CD4-positive, alpha-beta memory T cell (primary cell): ENCODE measurements at regions of chr5 and their contacts with region 1.

Region 1: GRCh38 chr5:69217548-69218526 is 16.8 kb upstream of the CDK7 start:
- DNase-seq: peak; percentile 89 to 94 (median 90)
- H3K4me3 ChIP-seq: peak overlapping the region; percentile 67 to 92
- H3K4me3 Mint-ChIP-seq: peak overlapping the region; percentile 96 to 100 (median 98)
- H3K27ac ChIP-seq: peak overlapping the region; percentile 87
- H3K27ac Mint-ChIP-seq: peak overlapping the region; percentile 97 to 100 (median 98)
- H3K4me1 ChIP-seq: peaks cover 22% of the 10 kb centered on the region
- H3K4me1 Mint-ChIP-seq: peaks cover 19 to 27% (median 25%) of the 10 kb centered on the region in 4 donors
- H3K27me3 ChIP-seq: no peaks in the 10 kb centered on the region
- H3K27me3 Mint-ChIP-seq: no peaks in the 10 kb centered on the region

Region 2: GRCh38 chr5:69083412-69083811 is 134.4 kb before region 1 on chr5:
- CTCF ChIA-PET with region 1: no interaction called
- POLR2A ChIA-PET with region 1: no interaction called
- intact Hi-C with region 1: no loop called
- DNase-seq: no peak
- H3K4me3 ChIP-seq: no peak overlapping the region
- H3K4me3 Mint-ChIP-seq: no peak overlapping the region
- H3K27ac ChIP-seq: no peak overlapping the region
- H3K27ac Mint-ChIP-seq: no peak overlapping the region
- H3K4me1 ChIP-seq: no peaks in the 10 kb centered on the region
- H3K4me1 Mint-ChIP-seq: peaks cover 0 to 8% (median 3%) of the 10 kb centered on the region in 4 donors
- H3K27me3 ChIP-seq: no peaks in the 10 kb centered on the region
- H3K27me3 Mint-ChIP-seq: peaks cover 1% of the 10 kb centered on the region in 2 donors

Region 3: GRCh38 chr5:69189162-69190086 is 28.4 kb before region 1 on chr5 and contains the start of gene CENPH:
- CTCF ChIA-PET with region 1: interaction called, 4 read pairs
- POLR2A ChIA-PET with region 1: interaction called, 3 read pairs
- intact Hi-C with region 1: loop called (anchors 1 kb)
- DNase-seq: peak; percentile 90 to 92 (median 91)
- H3K4me3 ChIP-seq: peak within 1 kb of the TSS; percentile 78
- H3K4me3 Mint-ChIP-seq: peak within 1 kb of the TSS; percentile 89 to 95 (median 92)
- H3K27ac ChIP-seq: peak within 1 kb of the TSS; percentile 68
- H3K27ac Mint-ChIP-seq: peak within 1 kb of the TSS; percentile 90 to 97 (median 96)
- H3K4me1 ChIP-seq: peaks cover 13% of the 10 kb centered on the region
- H3K4me1 Mint-ChIP-seq: peaks cover 5 to 21% (median 14%) of the 10 kb centered on the region in 4 donors
- H3K27me3 ChIP-seq: no peaks in the 10 kb centered on the region
- H3K27me3 Mint-ChIP-seq: no peaks in the 10 kb centered on the region
- total RNA-seq, gene CENPH: 6.1 to 6.9 TPM

Region 4: GRCh38 chr5:69369369-69370121 is 151.7 kb after region 1 on chr5 and contains the starts of genes AK6, RAD17 and TAF9:
- CTCF ChIA-PET with region 1: no interaction called
- POLR2A ChIA-PET with region 1: interaction called, 3 read pairs
- intact Hi-C with region 1: loop called (anchors 1 kb)
- DNase-seq: peak; percentile 94 to 98 (median 96)
- H3K4me3 ChIP-seq: peak within 1 kb of the TSS; percentile 67 to 75
- H3K4me3 Mint-ChIP-seq: peak within 1 kb of the TSS; percentile 95 to 99 (median 98)
- H3K27ac ChIP-seq: peak within 1 kb of the TSS; percentile 99
- H3K27ac Mint-ChIP-seq: peak within 1 kb of the TSS; percentile 99 to 100 (median 99)
- H3K4me1 ChIP-seq: peaks cover 29% of the 10 kb centered on the region
- H3K4me1 Mint-ChIP-seq: peaks cover 24 to 67% (median 46%) of the 10 kb centered on the region in 4 donors
- H3K27me3 ChIP-seq: no peaks in the 10 kb centered on the region
- H3K27me3 Mint-ChIP-seq: no peaks in the 10 kb centered on the region
- total RNA-seq, gene AK6: 25.3 to 31.4 TPM
- total RNA-seq, gene RAD17: 30.7 to 31.1 TPM
- total RNA-seq, gene TAF9: 42.3 to 45.9 TPM

Region 5: GRCh38 chr5:69492391-69492922 is 274.6 kb after region 1 on chr5 and contains the start of gene OCLN:
- CTCF ChIA-PET with region 1: no interaction called
- POLR2A ChIA-PET with region 1: no interaction called
- intact Hi-C with region 1: no loop called
- DNase-seq: peak in 1 of 5 donors; percentile 2
- H3K4me3 ChIP-seq: peak within 1 kb of the TSS in 1 of 2 donors; percentile 32
- H3K4me3 Mint-ChIP-seq: peak within 1 kb of the TSS; percentile 63 to 85 (median 70)
- H3K27ac ChIP-seq: no peak within 1 kb of the TSS
- H3K27ac Mint-ChIP-seq: no peak within 1 kb of the TSS
- H3K4me1 ChIP-seq: peaks cover 9% of the 10 kb centered on the region
- H3K4me1 Mint-ChIP-seq: peaks cover 2 to 27% (median 14%) of the 10 kb centered on the region in 4 donors
- H3K27me3 ChIP-seq: peaks cover 9% of the 10 kb centered on the region
- H3K27me3 Mint-ChIP-seq: peaks cover 35 to 43% of the 10 kb centered on the region in 2 donors
- total RNA-seq, gene OCLN: 4.9 to 6.0 TPM

Region 6: DNA sequence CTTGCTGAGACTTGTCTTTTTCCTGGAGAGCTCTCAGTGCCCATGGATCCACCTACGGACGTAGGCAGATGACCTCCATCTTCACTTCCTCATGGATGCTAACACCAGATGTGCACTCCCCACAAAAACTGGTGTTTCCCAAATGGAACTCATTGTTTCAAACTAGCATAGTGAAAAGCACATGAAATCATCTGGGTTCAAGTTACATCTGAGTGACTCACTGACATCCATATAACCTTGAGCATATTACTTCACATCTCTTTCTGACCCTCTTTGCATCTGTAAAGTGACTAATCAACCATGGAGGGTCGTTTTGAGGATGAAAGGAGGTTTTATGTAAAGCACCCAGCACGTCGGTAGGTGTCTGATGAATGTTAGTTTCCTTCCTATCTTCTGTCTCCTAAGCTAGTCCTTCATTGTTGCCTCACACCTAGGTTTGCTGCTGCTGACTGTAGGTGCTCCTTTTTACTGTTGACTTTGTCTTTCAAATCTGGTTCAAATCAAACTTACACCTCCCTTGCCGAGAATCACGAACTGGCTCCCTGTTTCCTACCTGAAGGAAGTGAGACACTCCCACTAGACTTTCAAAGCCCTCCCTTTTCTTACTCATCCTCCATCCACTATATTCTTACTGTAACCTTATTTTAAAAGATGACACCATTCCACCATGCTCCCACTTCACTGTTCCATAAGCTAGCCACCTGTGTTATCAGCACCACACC is 285.1 kb after region 1 on chr5:
- CTCF ChIA-PET with region 1: no interaction called
- POLR2A ChIA-PET with region 1: no interaction called
- intact Hi-C with region 1: no loop called
- DNase-seq: no peak
- H3K4me3 ChIP-seq: no peak overlapping the region
- H3K4me3 Mint-ChIP-seq: no peak overlapping the region
- H3K27ac ChIP-seq: no peak overlapping the region
- H3K27ac Mint-ChIP-seq: no peak overlapping the region
- H3K4me1 ChIP-seq: no peaks in the 10 kb centered on the region
- H3K4me1 Mint-ChIP-seq: no peaks in the 10 kb centered on the region
- H3K27me3 ChIP-seq: no peaks in the 10 kb centered on the region
- H3K27me3 Mint-ChIP-seq: peaks cover 6 to 8% of the 10 kb centered on the region in 2 donors